Dorsolateral prefrontal cortex (tissue), 120 donors: ENCODE measurements at regions of chr14 and their contacts with region 1.

Region 1: GRCh38 chr14:77301103-77301502 is 19.6 kb downstream of the POMT2 start:
- DNase-seq: peak; percentile 65 to 94 (median 88)
- H3K4me3 ChIP-seq: peak overlapping the region in 28 of 59 donors; percentile 3 to 43 (median 20)
- H3K27ac ChIP-seq: peak overlapping the region in 58 of 59 donors; percentile 86 to 100 (median 99)
- H3K27me3 ChIP-seq: no peaks in the 10 kb centered on the region
- CTCF ChIP-seq: peak; percentile 69 to 99 (median 90)

Region 2: DNA sequence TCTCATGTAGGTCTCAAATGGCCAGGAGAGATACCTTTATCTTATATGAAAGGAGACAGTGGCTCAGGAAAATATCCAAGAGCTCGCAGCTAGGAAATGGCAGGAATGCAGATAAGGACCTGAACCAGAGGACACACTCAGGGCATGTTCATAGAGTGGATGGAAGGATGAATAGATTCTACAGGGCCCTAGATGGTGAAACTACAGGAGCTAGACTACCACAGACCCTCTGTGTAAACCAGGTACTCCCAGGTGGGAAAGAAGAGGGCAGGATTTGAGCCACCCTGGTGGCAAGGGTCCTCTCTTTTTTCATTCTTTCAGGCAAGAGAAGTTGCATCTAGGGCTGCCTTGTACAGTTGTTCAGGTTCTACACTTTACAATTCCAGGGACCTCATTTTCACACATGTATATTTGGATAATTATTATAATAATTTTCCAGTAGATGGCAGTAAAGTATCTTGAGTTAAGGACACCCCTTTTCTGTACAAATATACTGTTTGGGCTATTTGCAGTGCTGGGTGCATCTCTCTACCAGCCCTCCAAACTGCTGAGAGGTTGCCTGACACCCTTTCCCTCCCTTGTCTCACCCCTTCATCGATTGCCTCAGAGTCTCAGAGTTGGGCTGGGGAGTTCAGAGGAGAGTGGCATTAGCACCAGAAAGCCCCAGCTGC is 149.1 kb before region 1 on chr14:
- intact Hi-C with region 1: loop called (anchors 2 to 5 kb)
- DNase-seq: no peak
- H3K4me3 ChIP-seq: no peak overlapping the region
- H3K27ac ChIP-seq: peak overlapping the region in 12 of 59 donors; percentile 0 to 63 (median 26)
- H3K27me3 ChIP-seq: no peaks in the 10 kb centered on the region
- CTCF ChIP-seq: peak in 53 of 56 donors; percentile 28 to 67 (median 48)